ENCODE measurements at regions of chr10 and their contacts with region 1.

Region 1: GRCh38 chr10:11757821-11758463 is 15.8 kb downstream of the ECHDC3 start:
- DNase-seq: peak; percentile 89
- H3K4me3 ChIP-seq: peak overlapping the region in 2 of 3 experiments; percentile 3 to 8
- H3K27ac ChIP-seq: peak overlapping the region; percentile 79
- H3K4me1 ChIP-seq: peaks cover 20% of the 10 kb centered on the region
- H3K27me3 ChIP-seq: no peaks in the 10 kb centered on the region
- CTCF ChIP-seq: peak; percentile 95 to 98 (median 97)

Region 2: DNA sequence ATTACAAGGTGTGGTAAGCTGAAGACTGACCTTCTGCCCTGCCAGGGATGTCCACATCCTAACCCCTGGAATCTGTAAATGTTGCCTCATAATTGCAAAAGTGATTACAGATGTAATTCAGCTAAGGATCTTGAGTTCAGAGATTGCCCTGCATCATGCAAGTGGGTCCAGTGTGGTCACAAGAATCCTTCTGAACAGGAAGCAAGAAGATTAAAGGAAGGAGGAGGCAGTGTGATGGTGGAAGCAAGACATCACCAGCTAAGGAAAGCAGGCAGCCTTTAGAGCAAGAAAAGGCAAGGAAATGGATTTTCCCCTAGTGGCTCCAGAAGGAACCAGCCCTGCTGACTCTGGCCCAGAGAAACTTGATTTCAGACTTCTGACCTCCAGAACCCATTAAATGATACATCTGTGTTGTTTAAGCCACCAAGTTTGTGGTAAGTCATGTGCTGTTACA is 224.6 kb before region 1 on chr10:
- dilution Hi-C with region 1: loop called (anchors 25 kb)
- DNase-seq: no peak
- H3K4me3 ChIP-seq: no peak overlapping the region
- H3K27ac ChIP-seq: no peak overlapping the region
- H3K4me1 ChIP-seq: no peaks in the 10 kb centered on the region
- H3K27me3 ChIP-seq: no peaks in the 10 kb centered on the region
- CTCF ChIP-seq: peak in 2 of 3 experiments; percentile 33 to 40

Region 3: GRCh38 chr10:11793762-11794479 is 36.0 kb after region 1 on chr10:
- dilution Hi-C with region 1: no loop called
- DNase-seq: no peak
- H3K4me3 ChIP-seq: no peak overlapping the region
- H3K27ac ChIP-seq: no peak overlapping the region
- H3K4me1 ChIP-seq: peaks cover 6% of the 10 kb centered on the region
- H3K27me3 ChIP-seq: peaks cover 4% of the 10 kb centered on the region
- CTCF ChIP-seq: no peak

Region 4: GRCh38 chr10:11930342-11930978 is 172.5 kb after region 1 on chr10:
- dilution Hi-C with region 1: no loop called
- DNase-seq: no peak
- H3K4me3 ChIP-seq: no peak overlapping the region
- H3K27ac ChIP-seq: no peak overlapping the region
- H3K4me1 ChIP-seq: peaks cover 6% of the 10 kb centered on the region
- H3K27me3 ChIP-seq: no peaks in the 10 kb centered on the region
- CTCF ChIP-seq: no peak